ENCODE measurements at regions of chr17 and their contacts with region 1.

Region 1: GRCh38 chr17:75749545-75750389 is 15.2 kb downstream of the GALK1 start:
- DNase-seq: peak; percentile 92
- H3K4me3 Mint-ChIP-seq: no peak overlapping the region
- H3K27ac Mint-ChIP-seq: peak overlapping the region; percentile 18
- H3K4me1 Mint-ChIP-seq: peaks cover 14% of the 10 kb centered on the region
- H3K27me3 Mint-ChIP-seq: no peaks in the 10 kb centered on the region

Region 2: DNA sequence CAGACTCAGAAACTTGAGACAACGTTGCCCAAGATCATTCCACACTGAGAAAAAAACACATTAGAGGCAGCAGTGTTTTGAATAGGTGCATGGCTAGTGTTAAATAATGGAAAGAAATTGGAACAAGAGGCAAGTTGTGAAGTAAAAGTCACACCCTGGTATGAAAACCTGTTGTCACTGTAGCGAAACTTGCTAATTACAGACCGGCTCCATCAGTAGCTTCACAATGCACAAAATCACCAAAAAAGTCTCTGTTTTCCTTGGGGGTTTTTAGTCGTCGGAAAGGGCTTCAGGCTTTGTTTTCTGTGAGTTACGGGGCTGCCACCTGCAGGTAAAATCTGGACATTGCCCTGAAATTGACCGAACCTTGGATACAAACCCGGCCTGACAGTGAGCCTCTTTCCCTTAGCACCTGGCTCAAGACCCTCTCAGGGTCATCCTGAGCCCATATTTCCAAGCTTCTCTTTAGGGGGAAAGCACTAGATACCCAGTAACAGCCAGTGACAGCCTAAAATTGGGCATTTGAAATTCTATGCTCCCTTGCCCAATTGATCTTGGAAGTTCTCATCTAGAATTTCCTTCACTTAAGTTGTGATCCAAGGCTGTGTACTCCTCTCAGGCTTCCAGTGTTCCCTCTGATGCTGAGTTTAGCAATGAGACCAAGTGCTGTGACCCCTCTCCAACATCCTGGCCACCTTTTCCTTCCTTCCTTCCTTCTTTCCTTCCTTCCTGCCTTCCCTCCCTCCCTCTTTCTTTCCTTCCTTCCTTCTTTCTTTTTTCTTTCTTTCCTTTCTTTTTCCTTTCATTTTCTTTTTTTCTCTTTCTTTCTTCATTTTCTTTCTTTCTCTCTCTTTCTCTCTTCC is 337.1 kb before region 1 on chr17:
- CTCF ChIA-PET with region 1: no interaction called
- intact Hi-C with region 1: no loop called
- DNase-seq: peak; percentile 87
- H3K4me3 Mint-ChIP-seq: peak overlapping the region; percentile 37
- H3K27ac Mint-ChIP-seq: no peak overlapping the region
- H3K4me1 Mint-ChIP-seq: peaks cover 18% of the 10 kb centered on the region
- H3K27me3 Mint-ChIP-seq: no peaks in the 10 kb centered on the region

Region 3: GRCh38 chr17:75430159-75430974 is 319.4 kb before region 1 on chr17:
- CTCF ChIA-PET with region 1: interaction called, 4 read pairs
- intact Hi-C with region 1: loop called (anchors 1 kb)
- DNase-seq: no peak
- H3K4me3 Mint-ChIP-seq: no peak overlapping the region
- H3K27ac Mint-ChIP-seq: no peak overlapping the region
- H3K4me1 Mint-ChIP-seq: peaks cover 8% of the 10 kb centered on the region
- H3K27me3 Mint-ChIP-seq: peaks cover 2% of the 10 kb centered on the region

Region 4: GRCh38 chr17:75601057-75602051 is 148.4 kb before region 1 on chr17:
- CTCF ChIA-PET with region 1: interaction called, 60 read pairs
- intact Hi-C with region 1: loop called (anchors 1 kb)
- DNase-seq: peak; percentile 76
- H3K4me3 Mint-ChIP-seq: no peak overlapping the region
- H3K27ac Mint-ChIP-seq: no peak overlapping the region
- H3K4me1 Mint-ChIP-seq: no peaks in the 10 kb centered on the region
- H3K27me3 Mint-ChIP-seq: no peaks in the 10 kb centered on the region

Region 5: GRCh38 chr17:75673487-75673886 is 76.3 kb before region 1 on chr17:
- CTCF ChIA-PET with region 1: interaction called, 127 read pairs
- intact Hi-C with region 1: loop called (anchors 1 kb)
- DNase-seq: no peak
- H3K4me3 Mint-ChIP-seq: no peak overlapping the region
- H3K27ac Mint-ChIP-seq: no peak overlapping the region
- H3K4me1 Mint-ChIP-seq: peaks cover 30% of the 10 kb centered on the region
- H3K27me3 Mint-ChIP-seq: no peaks in the 10 kb centered on the region

Region 6: GRCh38 chr17:75720725-75721462 is 28.9 kb before region 1 on chr17 and contains the start of gene ITGB4:
- CTCF ChIA-PET with region 1: interaction called, 10 read pairs
- intact Hi-C with region 1: no loop called
- DNase-seq: peak; percentile 68
- H3K4me3 Mint-ChIP-seq: peak within 1 kb of the TSS; percentile 67
- H3K27ac Mint-ChIP-seq: no peak within 1 kb of the TSS
- H3K4me1 Mint-ChIP-seq: peaks cover 2% of the 10 kb centered on the region
- H3K27me3 Mint-ChIP-seq: peaks cover 6% of the 10 kb centered on the region
- total RNA-seq, gene ITGB4: 0.83 to 1.0 TPM

Region 7: GRCh38 chr17:75764711-75765421 is 15.1 kb after region 1 on chr17 and contains the start of gene GALK1:
- CTCF ChIA-PET with region 1: interaction called, 76 read pairs
- intact Hi-C with region 1: no loop called
- DNase-seq: peak; percentile 82
- H3K4me3 Mint-ChIP-seq: peak within 1 kb of the TSS; percentile 84
- H3K27ac Mint-ChIP-seq: peak within 1 kb of the TSS; percentile 79
- H3K4me1 Mint-ChIP-seq: peaks cover 10% of the 10 kb centered on the region
- H3K27me3 Mint-ChIP-seq: no peaks in the 10 kb centered on the region
- total RNA-seq, gene GALK1: 48.7 to 50.2 TPM

Region 8: GRCh38 chr17:75845049-75845860 is 95.5 kb after region 1 on chr17:
- CTCF ChIA-PET with region 1: interaction called, 10 read pairs
- intact Hi-C with region 1: no loop called
- DNase-seq: peak; percentile 76
- H3K4me3 Mint-ChIP-seq: peak overlapping the region; percentile 95
- H3K27ac Mint-ChIP-seq: peak overlapping the region; percentile 72
- H3K4me1 Mint-ChIP-seq: peaks cover 22% of the 10 kb centered on the region
- H3K27me3 Mint-ChIP-seq: no peaks in the 10 kb centered on the region

Measured in activated naive CD4-positive, alpha-beta T cell treated with anti-CD3 and anti-CD28 coated beads for 36 hours (primary cell).